ENCODE measurements at regions of chr22 and their contacts with region 1.

Region 1: DNA sequence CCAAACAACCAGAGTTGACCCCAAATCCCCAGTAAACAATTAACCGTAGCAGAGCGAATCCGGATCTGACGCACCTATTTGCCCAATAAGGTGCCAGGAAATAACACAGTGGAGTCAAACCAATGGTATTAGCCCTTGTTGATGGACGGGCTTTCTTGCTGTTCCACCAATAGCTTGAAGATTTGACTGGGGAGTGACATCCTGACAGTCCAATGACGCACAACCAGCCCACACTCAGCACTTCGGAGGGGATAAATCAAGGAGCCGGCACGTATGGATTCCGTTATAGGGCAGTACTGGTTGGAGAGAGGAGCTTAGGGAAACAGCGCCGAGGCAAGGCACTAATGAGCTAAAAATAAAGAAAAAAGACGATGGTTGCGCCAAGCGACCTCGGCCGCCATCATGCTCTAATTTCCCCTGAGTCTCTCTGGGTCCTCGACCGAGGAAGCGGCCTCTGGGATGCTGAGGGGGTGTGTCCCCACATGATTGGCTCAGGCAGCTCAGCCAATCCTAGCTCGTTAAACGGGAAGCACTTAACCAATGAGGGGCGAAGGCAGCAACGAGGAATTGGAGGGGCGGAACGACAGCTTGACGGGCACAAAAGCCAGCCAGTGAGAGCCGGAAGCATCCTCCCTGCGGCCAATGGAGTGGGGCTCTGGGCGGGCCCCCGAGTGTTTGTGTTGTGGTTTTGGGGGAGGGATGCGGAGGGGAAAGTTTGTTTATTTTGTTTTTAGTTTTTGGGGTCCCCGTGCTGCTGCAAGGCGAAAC is 49.5 kb downstream of the FAM83F start:
- DNase-seq: peak; percentile 91 to 100 (median 99)
- ATAC-seq: peak; percentile 86 to 87
- H3K4me3 Mint-ChIP-seq: peak overlapping the region; percentile 93 to 100 (median 96)
- H3K27ac Mint-ChIP-seq: peak overlapping the region; percentile 97 to 100 (median 100)
- H3K4me1 Mint-ChIP-seq: peaks cover 19 to 49% (median 43%) of the 10 kb centered on the region in 4 donors
- H3K27me3 Mint-ChIP-seq: peaks cover 6 to 8% (median 7%) of the 10 kb centered on the region in 5 donors

Region 2: DNA sequence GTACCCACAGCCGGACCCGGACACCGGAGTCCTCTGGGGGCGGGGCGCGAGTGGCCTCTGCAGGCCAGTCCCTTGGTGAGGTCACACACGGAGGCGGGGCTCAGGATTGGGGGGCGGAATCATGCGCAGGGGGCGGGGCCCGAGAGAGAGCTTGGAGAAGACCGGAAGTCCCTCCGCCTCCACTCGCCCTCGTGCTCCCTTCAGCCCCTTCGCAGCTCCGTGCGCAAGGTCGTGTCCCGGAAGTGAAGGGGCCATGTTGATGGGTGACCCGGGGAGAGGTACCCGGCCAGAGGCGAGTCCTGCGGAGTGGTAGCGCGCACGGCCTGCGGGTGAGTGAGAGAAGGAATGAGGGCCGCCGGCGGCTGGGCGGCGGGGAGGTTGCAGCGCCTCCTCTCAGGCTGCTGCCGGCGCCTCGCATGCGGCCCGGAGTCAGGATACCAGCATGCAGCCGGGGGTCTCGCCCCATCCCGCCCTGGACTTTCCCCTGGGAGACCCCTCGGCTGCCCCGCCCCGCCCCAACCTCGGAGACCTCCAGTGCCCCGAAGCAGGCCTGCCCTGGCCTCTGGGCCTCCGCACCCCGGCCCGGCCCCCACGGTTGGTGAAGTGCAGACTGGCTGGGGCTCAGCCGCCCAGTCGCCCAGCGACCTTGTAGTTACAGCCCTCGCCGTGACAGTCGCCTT is 542.0 kb before region 1 on chr22 and contains the start of gene MIEF1:
- POLR2A ChIA-PET with region 1: interaction called, 10 read pairs
- DNase-seq: peak; percentile 76 to 93 (median 80)
- ATAC-seq: peak; percentile 95 to 96
- H3K4me3 Mint-ChIP-seq: peak within 1 kb of the TSS; percentile 83 to 99 (median 97)
- H3K27ac Mint-ChIP-seq: peak within 1 kb of the TSS; percentile 87 to 98 (median 95)
- H3K4me1 Mint-ChIP-seq: peaks cover 24 to 50% (median 46%) of the 10 kb centered on the region in 4 donors
- H3K27me3 Mint-ChIP-seq: no peaks in the 10 kb centered on the region
- polyA plus RNA-seq, gene MIEF1: 22.2 to 35.8 (median 25.9) TPM

Region 3: GRCh38 chr22:39927544-39927943 is 116.7 kb before region 1 on chr22:
- POLR2A ChIA-PET with region 1: interaction called, 11 read pairs
- DNase-seq: no peak
- ATAC-seq: no peak
- H3K4me3 Mint-ChIP-seq: no peak overlapping the region
- H3K27ac Mint-ChIP-seq: no peak overlapping the region
- H3K4me1 Mint-ChIP-seq: peaks cover 31 to 54% (median 40%) of the 10 kb centered on the region in 4 donors
- H3K27me3 Mint-ChIP-seq: no peaks in the 10 kb centered on the region

Region 4: GRCh38 chr22:40116496-40117200 is 72.4 kb after region 1 on chr22:
- POLR2A ChIA-PET with region 1: interaction called, 31 read pairs
- DNase-seq: peak; percentile 19 to 89 (median 74)
- ATAC-seq: peak; percentile 92 to 94
- H3K4me3 Mint-ChIP-seq: peak overlapping the region; percentile 37 to 86 (median 72)
- H3K27ac Mint-ChIP-seq: peak overlapping the region; percentile 81 to 98 (median 90)
- H3K4me1 Mint-ChIP-seq: peaks cover 43 to 93% (median 88%) of the 10 kb centered on the region in 4 donors
- H3K27me3 Mint-ChIP-seq: no peaks in the 10 kb centered on the region

Region 5: DNA sequence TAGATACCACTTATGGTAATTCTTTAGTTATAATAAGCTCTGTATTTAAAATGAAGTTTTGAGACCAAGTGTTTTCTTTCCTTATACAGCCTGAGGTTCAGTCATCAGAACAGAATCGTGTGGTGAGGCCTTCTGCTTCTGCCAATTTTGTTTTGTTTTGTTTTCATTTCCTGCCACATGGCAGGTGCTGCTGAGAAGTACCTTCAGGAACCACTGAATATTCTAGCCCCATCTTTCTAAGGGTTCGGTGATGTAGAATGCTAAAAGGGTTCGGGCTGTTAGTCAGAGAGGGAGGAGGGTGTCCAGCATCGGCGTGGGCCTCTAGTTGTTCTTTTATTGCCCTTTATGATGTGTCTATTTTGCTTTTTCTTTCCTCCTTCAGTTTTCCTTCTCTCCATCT is 159.3 kb after region 1 on chr22:
- POLR2A ChIA-PET with region 1: interaction called, 11 read pairs
- DNase-seq: peak in 7 of 10 donors; percentile 16 to 72 (median 43)
- ATAC-seq: peak; percentile 97 to 98
- H3K4me3 Mint-ChIP-seq: peak overlapping the region; percentile 32 to 75 (median 66)
- H3K27ac Mint-ChIP-seq: peak overlapping the region; percentile 56 to 94 (median 90)
- H3K4me1 Mint-ChIP-seq: peaks cover 34 to 76% (median 66%) of the 10 kb centered on the region in 4 donors
- H3K27me3 Mint-ChIP-seq: no peaks in the 10 kb centered on the region

Region 6: DNA sequence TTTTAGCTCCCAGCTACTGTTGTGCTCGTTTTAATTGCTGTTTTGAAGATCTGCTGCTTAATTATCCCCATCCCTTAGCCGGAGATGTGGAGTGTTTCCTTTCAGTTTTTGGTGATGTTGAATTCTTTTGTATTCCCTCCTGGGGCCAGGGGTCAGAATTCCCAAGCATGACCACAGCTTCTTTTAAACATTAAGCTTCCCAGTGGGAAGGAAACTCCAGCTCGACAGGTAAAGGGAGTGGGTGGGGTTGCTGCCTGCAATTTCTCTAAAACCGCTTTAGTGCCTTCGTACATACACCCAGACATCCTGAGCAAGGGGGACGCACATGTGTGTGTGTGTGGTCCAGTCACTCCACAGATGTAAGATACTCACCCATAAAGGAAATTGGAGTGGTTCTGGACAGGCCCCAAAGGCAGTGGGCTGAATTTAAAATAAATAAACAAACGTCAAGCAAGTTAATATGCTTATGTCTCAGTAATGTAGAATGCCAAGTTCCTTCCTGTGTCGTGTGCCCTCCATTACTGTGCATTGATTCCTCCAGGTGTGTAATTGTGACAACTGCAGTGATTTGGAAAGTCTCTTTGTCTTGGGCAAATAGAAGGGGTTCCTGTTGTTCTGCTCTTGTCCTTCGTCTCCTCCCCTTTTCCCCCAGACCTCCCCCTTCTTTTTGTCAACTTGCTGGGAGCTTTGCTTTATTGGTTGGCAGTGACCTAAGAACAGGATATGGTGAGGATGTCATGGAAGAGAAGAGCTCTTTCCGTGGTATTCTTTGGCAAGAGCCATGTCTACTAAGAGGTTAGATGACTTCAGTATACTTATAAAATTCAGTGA is 282.8 kb after region 1 on chr22:
- POLR2A ChIA-PET with region 1: interaction called, 35 read pairs
- DNase-seq: peak in 2 of 10 donors; percentile 60 to 61
- ATAC-seq: peak; percentile 8 to 10
- H3K4me3 Mint-ChIP-seq: peak overlapping the region in 9 of 10 donors; percentile 12 to 76 (median 67)
- H3K27ac Mint-ChIP-seq: peak overlapping the region; percentile 95 to 99 (median 98)
- H3K4me1 Mint-ChIP-seq: peaks cover 35 to 99% (median 95%) of the 10 kb centered on the region in 4 donors
- H3K27me3 Mint-ChIP-seq: no peaks in the 10 kb centered on the region

Region 7: DNA sequence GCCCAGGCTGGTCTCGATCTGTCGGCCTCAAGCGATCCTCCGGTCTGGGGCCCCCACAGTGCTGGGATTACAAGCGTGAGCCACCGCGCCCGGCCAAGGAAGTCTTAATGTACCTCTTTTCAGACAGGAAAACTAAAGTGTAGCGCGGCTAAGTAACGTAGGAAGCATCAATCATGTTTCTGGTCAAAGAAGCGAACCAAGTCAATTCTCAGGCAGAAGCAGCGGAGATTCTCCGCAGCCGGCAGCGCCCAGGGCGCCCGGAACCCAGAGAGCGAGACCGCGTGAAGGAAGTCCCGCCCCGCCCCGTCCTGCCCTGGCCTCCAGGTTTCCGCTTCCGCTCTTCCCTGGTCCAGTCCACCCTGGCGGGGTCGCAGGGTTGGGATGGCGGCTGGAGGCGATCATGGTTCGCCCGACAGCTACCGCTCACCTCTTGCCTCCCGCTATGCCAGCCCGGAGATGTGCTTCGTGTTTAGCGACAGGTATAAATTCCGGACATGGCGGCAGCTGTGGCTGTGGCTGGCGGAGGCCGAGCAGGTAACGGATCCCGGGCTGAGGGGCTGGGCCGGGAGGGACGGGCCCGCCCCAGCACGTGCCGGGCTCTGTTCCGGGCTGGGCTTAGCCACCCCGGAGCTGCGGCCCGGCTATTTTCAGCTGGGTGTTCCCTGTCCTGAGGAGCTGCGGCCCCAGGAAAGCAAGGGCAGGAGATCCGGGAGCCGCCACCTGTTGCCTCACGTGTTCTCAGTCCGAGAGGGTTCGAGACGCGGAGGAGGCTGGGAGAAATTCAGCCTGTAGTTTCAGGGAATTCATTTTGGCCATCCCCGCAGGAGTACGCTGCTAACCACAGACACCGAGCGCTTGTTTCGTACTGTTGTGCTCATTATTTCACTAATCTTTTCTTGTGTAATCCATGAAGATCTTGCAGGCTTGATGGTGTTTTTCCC is 302.2 kb after region 1 on chr22 and contains the start of gene ADSL:
- POLR2A ChIA-PET with region 1: interaction called, 73 read pairs
- DNase-seq: peak; percentile 68 to 88 (median 78)
- ATAC-seq: peak; percentile 82 to 84
- H3K4me3 Mint-ChIP-seq: peak within 1 kb of the TSS; percentile 91 to 99 (median 97)
- H3K27ac Mint-ChIP-seq: peak within 1 kb of the TSS; percentile 95 to 99 (median 98)
- H3K4me1 Mint-ChIP-seq: peaks cover 28 to 68% (median 50%) of the 10 kb centered on the region in 4 donors
- H3K27me3 Mint-ChIP-seq: no peaks in the 10 kb centered on the region
- polyA plus RNA-seq, gene ADSL: 97.0 to 130 (median 100.0) TPM